CD8-positive, alpha-beta memory T cell (primary cell): ENCODE measurements at regions of chr6 and their contacts with region 1.

Region 1: DNA sequence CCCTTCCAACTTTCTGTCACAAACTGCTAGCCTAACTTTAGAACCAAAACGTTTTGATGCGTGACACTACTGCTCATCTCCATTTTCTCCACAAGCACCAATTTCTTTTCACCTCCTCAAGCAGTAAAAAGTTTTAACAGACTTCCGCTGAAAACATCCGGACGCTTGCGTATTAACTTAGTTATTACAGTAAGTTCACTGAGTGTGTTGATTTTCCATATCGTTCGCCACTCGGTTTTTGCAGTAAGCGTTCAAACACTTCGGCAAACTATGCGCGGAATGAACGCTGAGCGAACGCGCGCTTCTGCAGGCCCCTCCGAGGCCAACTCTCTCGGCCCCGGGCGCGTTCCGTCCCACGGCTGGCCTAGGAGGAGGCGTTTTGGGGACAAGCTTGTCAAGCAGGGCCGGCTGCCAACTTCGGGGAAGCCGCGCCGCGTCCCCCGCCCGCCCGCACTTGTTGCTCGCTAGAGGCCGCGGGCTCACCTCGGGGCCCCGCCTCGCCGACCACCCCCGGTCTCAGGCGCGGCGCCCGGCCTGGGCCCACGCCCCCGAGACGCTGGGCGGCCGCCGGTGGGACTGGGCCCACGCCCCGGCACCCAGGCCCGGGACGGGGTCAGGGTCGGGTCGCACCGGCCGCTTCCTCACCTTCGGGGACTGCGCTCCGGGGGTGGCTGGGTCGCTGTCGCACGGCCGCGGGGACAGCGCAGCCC is 945 bp downstream of the PHF10 start:
- DNase-seq: peak; percentile 54 to 82 (median 75)
- H3K4me3 ChIP-seq: peak overlapping the region; percentile 75
- H3K4me3 Mint-ChIP-seq: peak overlapping the region; percentile 87 to 99 (median 90)
- H3K27ac ChIP-seq: peak overlapping the region; percentile 81
- H3K27ac Mint-ChIP-seq: peak overlapping the region; percentile 90 to 99 (median 94)
- H3K4me1 ChIP-seq: peaks cover 42% of the 10 kb centered on the region
- H3K4me1 Mint-ChIP-seq: peaks cover 42 to 64% (median 56%) of the 10 kb centered on the region in 3 donors
- H3K27me3 ChIP-seq: no peaks in the 10 kb centered on the region
- H3K27me3 Mint-ChIP-seq: no peaks in the 10 kb centered on the region

Region 2: DNA sequence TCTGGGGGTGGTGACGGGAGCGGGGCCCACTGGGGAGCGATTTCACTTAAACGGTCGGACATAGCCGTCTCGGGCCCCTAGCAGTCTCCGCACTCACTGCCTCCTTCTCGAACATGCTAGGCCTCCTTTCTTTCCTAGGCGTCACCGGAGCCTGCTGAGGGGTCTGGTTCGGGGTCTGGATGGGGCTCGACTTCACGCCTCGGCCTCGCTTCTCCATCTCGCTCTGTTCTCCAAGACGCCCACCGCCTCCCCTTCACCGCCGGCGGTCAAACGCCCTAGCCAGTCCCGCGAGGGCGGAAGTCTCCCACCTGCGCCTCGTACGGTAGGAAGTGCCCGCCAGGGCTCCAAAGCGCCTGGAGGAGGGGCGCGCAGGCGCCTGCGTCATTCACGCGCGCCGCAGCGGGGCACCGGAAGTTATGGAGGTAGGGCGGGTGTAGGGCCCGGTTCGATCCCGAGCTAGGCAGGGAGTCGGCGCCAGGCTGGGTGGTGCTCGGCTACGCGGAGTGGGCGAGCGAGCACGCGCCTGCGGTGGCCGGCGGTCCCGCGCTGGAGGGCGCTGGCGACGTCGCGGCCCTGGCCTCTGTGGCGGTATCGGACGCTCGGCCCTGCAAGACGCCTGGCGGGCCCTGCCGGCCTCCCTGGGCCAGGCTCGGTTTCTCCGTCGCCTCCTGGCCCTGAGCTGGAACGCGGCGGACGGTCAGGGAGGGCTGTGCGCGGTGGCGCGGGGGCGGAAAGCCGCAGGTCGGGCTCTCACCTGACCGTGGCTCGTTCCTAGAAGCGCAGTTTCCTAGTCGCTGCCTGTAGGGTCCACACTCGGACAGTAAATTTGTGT is 28.1 kb after region 1 on chr6 and contains the starts of genes DYNLT2 and ERMARD:
- CTCF ChIA-PET with region 1: interaction called, 7 read pairs
- POLR2A ChIA-PET with region 1: interaction called, 16 read pairs
- DNase-seq: peak; percentile 87 to 96 (median 94)
- H3K4me3 ChIP-seq: peak within 1 kb of the TSS; percentile 63
- H3K4me3 Mint-ChIP-seq: peak within 1 kb of the TSS; percentile 97 to 100 (median 99)
- H3K27ac ChIP-seq: peak within 1 kb of the TSS; percentile 93
- H3K27ac Mint-ChIP-seq: peak within 1 kb of the TSS; percentile 97 to 100 (median 100)
- H3K4me1 ChIP-seq: peaks cover 27% of the 10 kb centered on the region
- H3K4me1 Mint-ChIP-seq: peaks cover 34 to 38% (median 35%) of the 10 kb centered on the region in 3 donors
- H3K27me3 ChIP-seq: no peaks in the 10 kb centered on the region
- H3K27me3 Mint-ChIP-seq: no peaks in the 10 kb centered on the region
- total RNA-seq, gene DYNLT2: 1.4 to 1.9 TPM
- total RNA-seq, gene ERMARD: 26.2 to 27.9 TPM